Activated CD8-positive, alpha-beta T cell treated with anti-CD3 and anti-CD28 coated beads for 36 hours (primary cell): ENCODE measurements at regions of chr1 and their contacts with region 1.

Region 1: GRCh38 chr1:20493839-20494608 is 8.0 kb upstream of the CAMK2N1 start:
- DNase-seq: peak; percentile 87
- ATAC-seq: peak; percentile 64
- H3K4me3 Mint-ChIP-seq: no peak overlapping the region
- H3K27ac Mint-ChIP-seq: no peak overlapping the region
- H3K4me1 Mint-ChIP-seq: peaks cover 22% of the 10 kb centered on the region
- H3K27me3 Mint-ChIP-seq: peaks cover 10% of the 10 kb centered on the region
- CTCF ChIP-seq: peak; percentile 90

Region 2: GRCh38 chr1:20212685-20213331 is 281.2 kb before region 1 on chr1:
- CTCF ChIA-PET with region 1: interaction called, 68 read pairs
- POLR2A ChIA-PET with region 1: no interaction called
- intact Hi-C with region 1: loop called (anchors 2 kb)
- DNase-seq: peak; percentile 76
- ATAC-seq: peak; percentile 57
- H3K4me3 Mint-ChIP-seq: no peak overlapping the region
- H3K27ac Mint-ChIP-seq: no peak overlapping the region
- H3K4me1 Mint-ChIP-seq: peaks cover 19% of the 10 kb centered on the region
- H3K27me3 Mint-ChIP-seq: peaks cover 39% of the 10 kb centered on the region
- CTCF ChIP-seq: peak; percentile 88

Region 3: GRCh38 chr1:20361806-20362640 is 132.0 kb before region 1 on chr1:
- CTCF ChIA-PET with region 1: interaction called, 16 read pairs
- POLR2A ChIA-PET with region 1: no interaction called
- intact Hi-C with region 1: no loop called
- DNase-seq: peak; percentile 47
- ATAC-seq: no peak
- H3K4me3 Mint-ChIP-seq: no peak overlapping the region
- H3K27ac Mint-ChIP-seq: no peak overlapping the region
- H3K4me1 Mint-ChIP-seq: peaks cover 13% of the 10 kb centered on the region
- H3K27me3 Mint-ChIP-seq: peaks cover 65% of the 10 kb centered on the region
- CTCF ChIP-seq: peak; percentile 88

Region 4: DNA sequence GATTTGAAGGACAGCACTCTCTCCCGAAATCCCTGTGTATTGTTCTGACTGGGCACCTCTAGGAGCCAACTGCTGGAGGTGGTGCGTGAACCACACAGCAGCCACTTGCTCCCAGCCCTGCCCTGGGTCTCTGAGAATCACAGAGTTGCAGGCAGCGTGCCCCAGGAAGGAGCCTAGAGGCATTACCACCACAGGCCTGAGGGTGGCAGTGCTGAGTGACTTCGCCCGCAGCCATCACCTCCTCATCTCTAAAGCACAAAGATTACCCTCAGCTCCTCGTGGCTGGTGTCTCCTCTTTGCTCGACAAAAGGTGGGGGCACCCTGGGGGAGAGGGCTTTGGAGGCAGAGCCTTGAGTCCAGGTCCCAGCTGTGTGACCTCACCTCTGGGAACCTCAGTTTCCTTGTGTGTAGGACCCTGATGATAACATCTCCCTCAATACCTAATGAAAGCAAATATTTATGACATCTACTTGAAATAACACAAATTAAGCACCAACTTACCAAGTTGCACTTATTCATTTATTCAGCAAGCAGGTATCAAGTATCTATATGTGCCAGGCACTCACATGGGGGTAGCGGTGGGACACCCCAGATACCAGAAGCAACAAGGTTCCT is 117.0 kb before region 1 on chr1:
- CTCF ChIA-PET with region 1: interaction called, 14 read pairs
- POLR2A ChIA-PET with region 1: no interaction called
- intact Hi-C with region 1: loop called (anchors 5 kb)
- DNase-seq: peak; percentile 73
- ATAC-seq: peak; percentile 92
- H3K4me3 Mint-ChIP-seq: no peak overlapping the region
- H3K27ac Mint-ChIP-seq: no peak overlapping the region
- H3K4me1 Mint-ChIP-seq: peaks cover 6% of the 10 kb centered on the region
- H3K27me3 Mint-ChIP-seq: peaks cover 28% of the 10 kb centered on the region
- CTCF ChIP-seq: peak; percentile 86

Region 5: GRCh38 chr1:20430355-20431175 is 63.5 kb before region 1 on chr1:
- CTCF ChIA-PET with region 1: interaction called, 12 read pairs
- POLR2A ChIA-PET with region 1: no interaction called
- intact Hi-C with region 1: no loop called
- DNase-seq: peak; percentile 60
- ATAC-seq: peak; percentile 47
- H3K4me3 Mint-ChIP-seq: no peak overlapping the region
- H3K27ac Mint-ChIP-seq: no peak overlapping the region
- H3K4me1 Mint-ChIP-seq: peaks cover 10% of the 10 kb centered on the region
- H3K27me3 Mint-ChIP-seq: peaks cover 40% of the 10 kb centered on the region
- CTCF ChIP-seq: peak; percentile 91

Region 6: GRCh38 chr1:20505488-20505887 is 11.5 kb after region 1 on chr1:
- CTCF ChIA-PET with region 1: interaction called, 32 read pairs
- POLR2A ChIA-PET with region 1: interaction called, 3 read pairs
- intact Hi-C with region 1: no loop called
- DNase-seq: no peak
- ATAC-seq: no peak
- H3K4me3 Mint-ChIP-seq: no peak overlapping the region
- H3K27ac Mint-ChIP-seq: no peak overlapping the region
- H3K4me1 Mint-ChIP-seq: peaks cover 24% of the 10 kb centered on the region
- H3K27me3 Mint-ChIP-seq: no peaks in the 10 kb centered on the region
- CTCF ChIP-seq: no peak

Region 7: DNA sequence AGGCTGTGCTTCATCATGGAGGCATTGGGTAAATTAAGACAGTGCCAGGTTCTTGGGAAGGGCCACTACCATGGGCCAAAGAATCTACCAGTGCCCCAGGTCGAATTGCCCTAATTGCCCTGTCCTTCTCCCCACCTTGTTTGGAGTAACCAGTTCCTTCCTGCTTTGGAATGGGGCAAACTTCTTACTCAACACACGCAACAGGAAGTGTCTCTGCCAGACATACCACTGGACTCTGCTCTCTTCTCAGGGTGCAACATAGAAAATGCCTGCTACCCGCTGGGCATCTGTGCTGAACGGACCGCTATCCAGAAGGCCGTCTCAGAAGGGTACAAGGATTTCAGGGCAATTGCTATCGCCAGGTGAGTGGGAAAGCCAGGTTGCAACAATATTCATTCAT is 110.7 kb after region 1 on chr1:
- CTCF ChIA-PET with region 1: no interaction called
- POLR2A ChIA-PET with region 1: no interaction called
- intact Hi-C with region 1: no loop called
- DNase-seq: no peak
- ATAC-seq: no peak
- H3K4me3 Mint-ChIP-seq: no peak overlapping the region
- H3K27ac Mint-ChIP-seq: no peak overlapping the region
- H3K4me1 Mint-ChIP-seq: no peaks in the 10 kb centered on the region
- H3K27me3 Mint-ChIP-seq: peaks cover 2% of the 10 kb centered on the region
- CTCF ChIP-seq: no peak